Calu3 (cell line): ENCODE measurements at regions of chr1 and their contacts with region 1.

Region 1: GRCh38 chr1:43853161-43853921 is 80.3 kb upstream of the ARTN start:
- DNase-seq: peak; percentile 70
- H3K4me3 Mint-ChIP-seq: no peak overlapping the region
- H3K27ac Mint-ChIP-seq: no peak overlapping the region
- H3K4me1 Mint-ChIP-seq: peaks cover 46% of the 10 kb centered on the region
- H3K27me3 Mint-ChIP-seq: no peaks in the 10 kb centered on the region
- CTCF ChIP-seq: no peak

Region 2: DNA sequence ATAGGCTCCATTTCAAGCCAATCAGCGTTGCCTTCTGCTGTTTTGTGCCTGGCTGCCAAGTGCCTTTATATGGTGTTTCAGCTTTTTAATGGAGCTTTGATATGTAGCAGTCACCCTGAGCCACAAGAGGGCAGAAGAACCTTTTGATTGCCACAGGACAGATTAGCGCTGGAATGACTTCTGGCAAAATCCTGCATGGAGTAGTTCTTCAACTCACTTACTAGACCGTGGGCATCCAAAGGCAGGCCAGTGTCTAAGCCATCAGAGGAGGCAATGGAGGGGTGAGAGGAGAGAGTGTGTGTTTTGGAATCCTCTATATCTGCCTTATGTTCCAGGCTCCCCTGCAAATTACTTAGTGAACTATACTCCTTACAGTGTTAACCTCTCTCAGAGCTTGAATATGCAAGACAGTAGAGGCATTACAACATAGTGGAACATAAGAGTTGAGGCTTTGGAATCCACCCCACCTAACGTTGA is 89.8 kb before region 1 on chr1:
- CTCF ChIA-PET with region 1: interaction called, 14 read pairs
- intact Hi-C with region 1: loop called (anchors 1 kb)
- DNase-seq: peak; percentile 74
- H3K4me3 Mint-ChIP-seq: no peak overlapping the region
- H3K27ac Mint-ChIP-seq: no peak overlapping the region
- H3K4me1 Mint-ChIP-seq: no peaks in the 10 kb centered on the region
- H3K27me3 Mint-ChIP-seq: no peaks in the 10 kb centered on the region
- CTCF ChIP-seq: peak; percentile 77

Region 3: DNA sequence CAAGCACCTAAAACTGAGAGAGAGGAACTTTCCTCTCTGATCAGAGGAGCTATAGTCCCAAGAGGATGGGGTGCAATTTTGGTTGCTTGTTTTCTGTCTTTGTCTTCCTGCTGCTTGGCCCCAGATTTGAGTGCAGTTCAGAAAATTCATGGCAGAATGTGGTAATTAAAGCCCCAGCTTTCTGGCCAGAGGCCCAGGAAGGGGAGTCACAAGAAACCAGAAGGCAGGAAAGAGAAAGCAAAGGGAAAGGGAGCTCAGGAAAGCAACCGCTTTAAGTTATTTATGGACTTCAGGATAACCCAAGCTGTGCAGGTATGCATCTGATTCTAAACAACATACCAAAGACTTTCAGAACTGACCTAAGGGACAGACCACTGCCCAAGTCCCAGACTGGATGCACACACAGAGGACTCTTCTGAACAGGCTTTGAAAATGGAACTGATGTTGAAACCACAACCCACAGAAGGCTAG is 57.2 kb before region 1 on chr1:
- CTCF ChIA-PET with region 1: interaction called, 3 read pairs
- intact Hi-C with region 1: loop called (anchors 5 kb)
- DNase-seq: no peak
- H3K4me3 Mint-ChIP-seq: no peak overlapping the region
- H3K27ac Mint-ChIP-seq: no peak overlapping the region
- H3K4me1 Mint-ChIP-seq: peaks cover 7% of the 10 kb centered on the region
- H3K27me3 Mint-ChIP-seq: no peaks in the 10 kb centered on the region
- CTCF ChIP-seq: no peak

Region 4: GRCh38 chr1:44084998-44085675 is 231.8 kb after region 1 on chr1:
- CTCF ChIA-PET with region 1: no interaction called
- intact Hi-C with region 1: no loop called
- DNase-seq: peak; percentile 5
- H3K4me3 Mint-ChIP-seq: no peak overlapping the region
- H3K27ac Mint-ChIP-seq: no peak overlapping the region
- H3K4me1 Mint-ChIP-seq: peaks cover 24% of the 10 kb centered on the region
- H3K27me3 Mint-ChIP-seq: peaks cover 3% of the 10 kb centered on the region
- CTCF ChIP-seq: no peak